ENCODE measurements at regions of chr19 and their contacts with region 1.

Region 1: GRCh38 chr19:19531951-19532805 is 3.5 kb downstream of the YJEFN3 start:
- DNase-seq: peak; percentile 77 to 98 (median 90)

Region 2: DNA sequence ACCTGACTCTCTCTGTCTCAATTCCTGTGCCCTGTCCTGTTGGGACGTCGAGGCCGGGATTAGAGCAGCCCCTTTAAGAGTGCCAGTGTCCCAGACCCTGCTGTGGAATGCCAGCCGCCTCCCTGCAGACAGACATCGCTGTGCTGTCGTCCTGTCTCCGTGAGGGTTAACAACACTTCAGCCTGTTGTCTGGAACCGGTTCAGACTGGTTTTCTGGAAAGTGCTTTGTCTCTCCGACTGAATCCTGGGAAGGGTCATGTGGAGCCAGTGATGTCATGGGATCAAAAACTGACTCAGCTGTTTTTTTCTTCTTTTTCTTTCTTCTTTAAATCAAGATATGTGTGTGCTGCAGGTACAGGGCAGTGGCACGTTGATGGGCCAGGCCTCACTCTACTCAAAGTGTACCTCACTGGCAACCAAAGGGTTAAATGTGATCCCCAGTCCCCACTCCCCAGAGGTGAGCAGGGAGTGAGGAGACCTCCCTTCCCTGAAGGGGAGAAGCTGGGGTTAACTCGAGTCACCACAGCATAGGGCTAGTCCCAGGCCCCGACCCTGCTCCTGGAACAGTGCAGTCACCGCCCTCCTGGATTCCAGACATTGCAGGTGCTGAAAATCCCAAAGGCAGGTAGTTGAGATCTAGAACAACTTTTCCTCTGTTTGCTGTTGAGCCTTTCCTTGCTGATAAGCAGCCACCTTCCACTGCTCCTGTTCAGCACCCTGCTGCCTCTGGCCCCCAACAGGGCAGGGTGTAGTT is 67.7 kb before region 1 on chr19:
- intact Hi-C with region 1: no loop called
- DNase-seq: peak in 3 of 10 donors; percentile 41 to 59 (median 49)

Region 3: DNA sequence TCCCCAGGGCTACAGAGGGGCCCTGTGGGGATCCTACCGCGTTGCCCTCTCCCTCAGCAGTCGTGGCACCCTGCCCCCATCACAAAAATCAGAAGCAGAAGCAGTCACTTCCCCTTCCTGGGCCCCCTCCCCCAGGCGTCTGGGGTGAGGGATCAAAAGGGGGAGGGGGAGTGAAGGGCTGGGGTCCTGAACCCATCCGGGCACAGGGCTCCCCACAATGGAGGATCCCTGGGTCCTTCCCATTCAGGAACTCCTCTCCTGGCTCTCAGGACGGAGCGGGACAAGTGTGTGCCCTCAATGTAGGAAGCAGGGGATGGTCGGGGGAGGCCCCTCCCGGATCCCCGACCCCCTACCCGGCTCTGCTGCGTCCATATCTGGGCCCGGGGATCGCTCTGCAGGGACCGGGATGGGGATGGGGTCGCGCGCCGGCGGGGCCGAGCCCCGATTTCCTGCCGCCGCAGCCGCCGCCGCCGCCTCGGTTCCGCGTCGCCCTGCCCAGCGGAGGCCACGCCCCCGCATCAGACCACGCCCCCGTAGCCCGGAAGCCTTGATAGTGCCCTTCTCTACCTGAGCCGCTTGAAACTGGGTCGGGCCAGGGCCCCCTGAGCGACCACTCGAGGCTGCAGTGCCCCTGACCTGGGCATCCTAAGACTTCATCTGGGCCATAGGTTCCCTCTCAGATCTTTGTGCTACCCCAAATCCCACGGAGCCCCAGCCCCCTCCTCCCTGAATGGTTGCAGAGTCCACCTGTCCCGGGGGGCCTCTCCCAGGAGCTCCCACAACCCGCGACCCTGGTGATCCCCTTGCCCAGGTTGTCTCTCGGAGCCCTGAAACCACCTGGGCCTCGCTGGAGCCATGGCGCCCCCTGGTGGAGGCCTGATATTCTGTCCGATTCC is 111.2 kb after region 1 on chr19 and contains the start of gene GMIP:
- intact Hi-C with region 1: loop called (anchors 1 kb)
- DNase-seq: peak in 9 of 10 donors; percentile 40 to 95 (median 74)

Region 4: GRCh38 chr19:19657397-19657783 is 125.2 kb after region 1 on chr19:
- intact Hi-C with region 1: no loop called
- DNase-seq: peak in 8 of 10 donors; percentile 48 to 95 (median 77)

Measured in posterior cingulate gyrus (tissue), 11 donors.